Dendritic cell treated with granulocyte-macrophage colony-stimulating factor and Interleukin-4, amounts not matched to agents 40 ng/mL and 50 ng/mL, for 4 days (primary cell): ENCODE measurements at regions of chr12 and their contacts with region 1.

Region 1: DNA sequence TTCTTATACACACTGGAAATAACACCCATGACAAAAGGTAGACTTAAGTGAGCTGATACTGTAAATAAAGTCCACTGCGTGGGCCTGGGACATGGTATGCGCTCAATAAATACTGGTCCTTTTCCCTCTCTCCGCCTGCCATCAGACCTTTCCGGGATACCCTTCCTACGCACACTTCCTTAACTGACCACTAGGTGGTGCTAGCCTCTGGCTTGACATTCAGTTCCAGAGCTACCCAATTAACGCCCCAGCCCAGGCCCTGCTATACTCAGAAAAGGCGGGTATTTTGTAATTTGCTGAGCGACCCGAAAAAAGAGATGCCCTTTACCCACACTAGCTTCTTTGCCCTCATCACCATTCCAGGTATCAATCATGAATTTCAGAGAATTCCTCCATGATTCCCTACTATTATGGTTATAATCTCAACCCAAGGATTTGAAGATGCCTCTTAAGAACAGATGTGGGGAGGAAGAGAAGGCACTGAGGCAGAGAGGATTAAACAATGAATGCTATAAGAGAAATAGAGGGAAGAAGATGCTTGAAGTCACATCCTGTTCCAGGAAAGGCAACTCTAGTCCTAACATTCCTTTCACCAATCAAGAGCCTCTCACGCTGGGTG is 3.9 kb upstream of the LRP1 start:
- H3K4me3 Mint-ChIP-seq: no peak overlapping the region
- H3K27ac Mint-ChIP-seq: no peak overlapping the region
- H3K4me1 Mint-ChIP-seq: peaks cover 13% of the 10 kb centered on the region
- H3K27me3 Mint-ChIP-seq: peaks cover 7% of the 10 kb centered on the region

Region 2: GRCh38 chr12:57175428-57176138 is 51.2 kb after region 1 on chr12:
- intact Hi-C with region 1: loop called (anchors 2 kb)
- H3K4me3 Mint-ChIP-seq: no peak overlapping the region
- H3K27ac Mint-ChIP-seq: no peak overlapping the region
- H3K4me1 Mint-ChIP-seq: no peaks in the 10 kb centered on the region
- H3K27me3 Mint-ChIP-seq: no peaks in the 10 kb centered on the region

Region 3: DNA sequence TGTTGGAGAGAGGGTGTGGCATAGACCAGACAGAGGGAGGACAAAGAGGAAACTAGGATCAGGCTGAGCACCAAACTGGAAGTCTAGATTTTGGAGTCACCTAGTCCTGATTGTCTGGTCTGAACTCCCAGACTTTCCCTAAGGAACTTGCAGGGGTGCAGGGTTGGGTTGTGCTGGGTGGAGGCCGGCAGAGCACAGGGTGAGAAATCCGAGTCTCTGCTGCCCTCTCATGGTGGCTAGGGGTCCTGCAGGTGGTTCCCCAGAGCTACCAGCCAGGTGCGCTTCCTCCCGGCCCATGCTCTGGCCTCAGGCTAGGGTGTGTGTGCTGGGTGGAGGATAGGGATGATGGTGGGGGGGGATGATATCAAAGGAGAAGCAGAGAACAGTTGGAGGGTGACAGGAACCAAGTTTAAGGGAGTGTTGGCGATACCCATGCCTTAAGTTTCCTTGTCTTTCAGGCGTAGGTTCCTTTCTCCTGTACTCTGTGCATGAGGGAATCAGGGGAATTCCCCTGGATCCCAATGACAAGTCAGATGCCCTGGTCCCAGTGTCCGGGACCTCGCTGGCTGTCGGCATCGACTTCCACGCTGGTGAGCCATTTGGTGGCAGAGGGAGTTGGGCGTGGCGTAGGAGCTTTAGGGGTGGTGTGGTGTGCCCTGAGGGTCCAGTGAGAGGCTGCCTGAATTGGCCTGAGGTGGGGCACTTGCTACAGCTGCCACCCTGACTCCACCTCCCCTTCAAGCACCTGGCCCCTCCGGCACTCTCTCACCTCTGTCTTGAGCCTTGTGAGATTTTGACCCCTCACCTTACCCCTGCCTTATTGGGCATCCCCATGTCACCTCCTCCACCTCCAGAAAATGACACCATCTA is 58.8 kb after region 1 on chr12:
- intact Hi-C with region 1: loop called (anchors 2 kb)
- H3K4me3 Mint-ChIP-seq: no peak overlapping the region
- H3K27ac Mint-ChIP-seq: no peak overlapping the region
- H3K4me1 Mint-ChIP-seq: peaks cover 11% of the 10 kb centered on the region
- H3K27me3 Mint-ChIP-seq: no peaks in the 10 kb centered on the region